ENCODE measurements at regions of chr19 and their contacts with region 1.

Region 1: DNA sequence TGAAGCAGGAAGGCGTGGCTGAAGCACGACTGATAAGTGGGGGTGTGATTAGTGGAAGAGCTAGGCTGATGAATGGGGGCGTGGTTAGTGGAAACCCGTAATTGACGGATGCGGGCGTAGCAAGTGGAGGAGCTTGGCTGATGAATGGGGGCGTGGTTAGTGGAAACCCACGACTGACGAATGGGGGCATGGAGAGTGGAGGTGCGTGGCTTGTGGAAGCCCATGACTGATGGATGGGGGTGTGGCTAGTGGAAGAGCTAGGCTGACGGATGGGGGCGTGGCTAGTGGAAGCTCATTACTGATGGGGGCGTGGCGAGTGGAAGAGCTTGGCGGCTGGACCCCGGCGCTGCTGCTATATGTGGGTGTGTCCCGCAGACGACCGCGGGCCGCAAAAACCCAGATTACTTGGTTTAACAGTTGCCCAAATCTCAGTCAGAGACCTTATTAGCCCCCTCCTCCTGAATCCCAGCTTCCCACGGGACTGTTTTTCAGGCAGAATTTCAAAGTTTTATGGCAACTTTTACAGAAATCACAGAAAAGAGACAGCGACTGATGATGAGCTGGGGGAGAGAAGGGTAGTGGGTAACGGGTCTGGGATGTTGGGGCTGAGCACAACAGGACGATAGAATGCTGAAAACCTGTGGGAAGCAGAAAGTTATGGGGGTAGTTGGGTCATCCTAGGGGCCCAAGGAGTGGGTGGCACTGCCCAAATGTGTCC is 9.0 kb upstream of the MEIS3 start:
- DNase-seq: peak; percentile 92 to 99
- H3K4me3 ChIP-seq: peak overlapping the region in 1 of 2 donors; percentile 5
- H3K27ac ChIP-seq: peak overlapping the region; percentile 80 to 88
- H3K4me1 ChIP-seq: peaks cover 6 to 8% of the 10 kb centered on the region in 2 donors
- H3K27me3 ChIP-seq: no peaks in the 10 kb centered on the region
- CTCF ChIP-seq: no peak
- POLR2A ChIP-seq: no peak

Region 2: DNA sequence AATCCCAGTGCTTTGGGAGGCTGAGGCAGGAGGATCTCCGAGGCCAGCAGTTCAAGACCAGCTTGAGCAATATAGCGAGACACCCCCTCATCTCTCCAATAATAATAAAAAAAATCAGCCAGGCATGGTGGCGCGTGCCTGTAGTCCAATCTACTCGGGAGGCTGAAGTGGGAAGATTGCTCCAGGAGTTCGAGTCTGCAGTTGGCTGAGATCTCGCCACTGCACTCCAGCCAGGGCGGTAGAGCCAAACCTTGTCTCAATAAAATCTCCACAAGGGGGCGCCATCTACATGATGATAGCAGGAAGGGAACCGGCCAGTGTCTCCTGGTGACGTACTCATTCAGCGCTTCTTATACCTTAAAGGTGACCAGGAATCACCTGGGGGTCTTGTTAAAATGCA is 132.3 kb before region 1 on chr19:
- intact Hi-C with region 1: loop called (anchors 10 kb)
- DNase-seq: peak; percentile 53 to 81
- H3K4me3 ChIP-seq: no peak overlapping the region
- H3K27ac ChIP-seq: no peak overlapping the region
- H3K4me1 ChIP-seq: no peaks in the 10 kb centered on the region
- H3K27me3 ChIP-seq: no peaks in the 10 kb centered on the region
- CTCF ChIP-seq: peak; percentile 56 to 66 (median 60)
- POLR2A ChIP-seq: no peak

Region 3: GRCh38 chr19:47336853-47337279 is 91.5 kb before region 1 on chr19:
- intact Hi-C with region 1: no loop called
- DNase-seq: no peak
- H3K4me3 ChIP-seq: no peak overlapping the region
- H3K27ac ChIP-seq: no peak overlapping the region
- H3K4me1 ChIP-seq: no peaks in the 10 kb centered on the region
- H3K27me3 ChIP-seq: no peaks in the 10 kb centered on the region
- CTCF ChIP-seq: no peak
- POLR2A ChIP-seq: no peak

Region 4: DNA sequence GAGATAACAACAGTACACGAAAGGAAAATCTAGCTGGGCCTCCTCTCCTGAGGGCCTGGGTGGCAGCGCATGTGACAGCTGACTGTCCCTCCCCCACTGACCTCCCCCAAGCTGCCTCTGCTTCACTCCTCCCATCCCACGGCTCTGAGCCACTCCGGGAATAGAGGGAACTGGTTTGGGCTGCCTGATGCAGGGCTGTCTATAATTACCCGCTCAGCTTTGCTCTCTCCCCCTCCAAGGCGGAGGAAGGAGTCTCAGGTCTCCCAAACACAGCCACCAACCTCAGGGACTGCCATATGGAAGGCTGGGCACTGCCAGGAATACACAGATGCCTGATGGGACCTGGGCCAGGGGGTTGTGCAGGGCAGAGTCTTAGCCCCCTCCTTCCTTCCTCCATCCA is 78.7 kb after region 1 on chr19:
- intact Hi-C with region 1: no loop called
- DNase-seq: no peak
- H3K4me3 ChIP-seq: no peak overlapping the region
- H3K27ac ChIP-seq: peak overlapping the region; percentile 58 to 96
- H3K4me1 ChIP-seq: peaks cover 30 to 56% of the 10 kb centered on the region in 2 donors
- H3K27me3 ChIP-seq: no peaks in the 10 kb centered on the region
- CTCF ChIP-seq: no peak
- POLR2A ChIP-seq: no peak

Region 5: GRCh38 chr19:47561440-47562057 is 133.2 kb after region 1 on chr19:
- intact Hi-C with region 1: no loop called
- DNase-seq: no peak
- H3K4me3 ChIP-seq: no peak overlapping the region
- H3K27ac ChIP-seq: no peak overlapping the region
- H3K4me1 ChIP-seq: no peaks in the 10 kb centered on the region
- H3K27me3 ChIP-seq: no peaks in the 10 kb centered on the region
- CTCF ChIP-seq: no peak
- POLR2A ChIP-seq: no peak

Measured in uterus (tissue), 4 donors.